ENCODE measurements at regions of chr1 and their contacts with region 1.

Region 1: DNA sequence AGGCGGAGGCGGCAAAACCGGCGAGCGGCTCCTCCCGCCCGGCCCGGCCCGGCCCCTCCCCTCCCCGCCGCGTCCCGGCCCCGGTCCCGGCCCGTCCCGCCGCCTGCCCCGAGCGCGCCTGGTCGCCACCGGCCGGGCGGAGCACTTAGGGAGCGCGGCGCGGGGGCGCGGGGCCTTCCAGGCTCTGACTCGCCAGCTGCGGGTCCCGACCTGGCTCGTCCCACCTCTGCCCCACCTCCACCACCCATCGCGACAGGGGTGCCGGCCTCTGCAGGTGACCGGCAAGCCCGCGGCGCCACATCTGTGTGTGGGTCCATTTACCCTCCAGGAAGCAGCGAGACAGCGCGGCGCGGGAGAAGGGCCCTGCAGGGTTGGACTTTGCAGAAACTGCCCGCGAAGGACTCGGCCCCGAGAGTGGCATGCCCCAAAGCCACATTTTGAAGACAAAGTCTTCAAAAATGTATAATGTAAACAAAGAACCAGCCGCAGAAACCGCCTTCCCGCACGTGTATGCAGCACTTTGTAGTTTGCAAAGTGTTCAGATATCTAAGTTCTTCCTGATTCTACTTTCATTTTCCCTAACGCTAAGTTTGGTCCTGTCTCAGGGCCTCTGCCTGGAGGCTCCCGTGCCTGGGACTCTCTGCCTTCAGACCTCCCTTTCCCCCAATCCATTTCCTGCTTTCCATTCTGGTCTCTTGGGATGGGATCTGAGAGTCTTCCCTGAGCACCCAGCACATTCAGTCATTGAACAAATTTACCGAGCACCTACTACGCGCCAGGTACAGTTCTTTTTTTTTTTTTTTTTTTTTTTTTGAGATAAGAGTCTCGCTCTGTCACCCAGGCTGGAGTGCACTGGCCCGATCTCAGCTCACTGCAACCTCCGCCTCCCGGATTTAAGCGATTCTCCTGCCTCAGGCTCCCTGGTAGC is at the start of gene TMCO4:
- DNase-seq: peak in 1 of 2 donors; percentile 74
- H3K4me3 ChIP-seq: peak within 1 kb of the TSS; percentile 74 to 80
- H3K27ac ChIP-seq: peak within 1 kb of the TSS; percentile 80 to 89
- H3K4me1 ChIP-seq: peaks cover 6 to 7% of the 10 kb centered on the region in 2 donors
- H3K27me3 ChIP-seq: no peaks in the 10 kb centered on the region
- CTCF ChIP-seq: no peak
- total RNA-seq, gene TMCO4: 5.7 TPM

Region 2: GRCh38 chr1:19728413-19729145 is 71.6 kb before region 1 on chr1:
- intact Hi-C with region 1: loop called (anchors 5 kb)
- DNase-seq: peak in 1 of 2 donors; percentile 66
- H3K4me3 ChIP-seq: no peak overlapping the region
- H3K27ac ChIP-seq: peak overlapping the region; percentile 77 to 88
- H3K4me1 ChIP-seq: peaks cover 0 to 29% of the 10 kb centered on the region in 2 donors
- H3K27me3 ChIP-seq: no peaks in the 10 kb centered on the region
- CTCF ChIP-seq: no peak

Region 3: DNA sequence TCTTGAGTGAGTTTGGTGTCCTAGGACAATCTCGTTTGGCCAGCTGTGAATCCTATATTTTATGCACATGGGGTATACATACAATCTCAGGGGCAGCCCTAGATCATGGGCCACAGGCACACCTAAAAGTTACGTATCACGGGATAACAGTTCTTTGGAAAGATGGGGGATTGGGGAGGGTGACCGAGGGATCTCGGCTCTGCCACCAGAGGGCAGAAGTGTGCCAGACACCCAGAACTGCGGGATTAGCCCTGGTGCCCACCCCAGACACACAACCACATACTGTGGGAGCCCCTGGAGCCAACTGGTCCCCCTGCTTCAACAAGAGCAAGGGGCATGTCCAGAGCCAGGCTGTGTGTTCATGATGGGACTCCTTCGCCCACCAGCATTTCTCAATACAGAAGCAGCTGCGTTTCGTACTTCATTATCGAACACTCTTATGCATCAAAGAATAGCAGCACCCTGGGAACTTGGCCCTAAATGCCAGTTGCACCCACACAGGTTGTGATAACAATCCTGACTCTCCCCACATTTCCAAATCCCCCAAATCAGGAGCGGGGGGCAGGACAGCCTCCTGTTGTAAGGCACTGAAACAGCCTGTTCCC is 37.9 kb before region 1 on chr1:
- intact Hi-C with region 1: loop called (anchors 5 kb)
- DNase-seq: no peak
- H3K4me3 ChIP-seq: no peak overlapping the region
- H3K27ac ChIP-seq: peak overlapping the region in 1 of 2 donors; percentile 10
- H3K4me1 ChIP-seq: peaks cover 6 to 9% of the 10 kb centered on the region in 2 donors
- H3K27me3 ChIP-seq: no peaks in the 10 kb centered on the region
- CTCF ChIP-seq: peak in 2 of 3 experiments; percentile 40 to 47

Region 4: GRCh38 chr1:20696397-20697329 is 896.5 kb after region 1 on chr1:
- intact Hi-C with region 1: no loop called
- DNase-seq: peak; percentile 46 to 91
- H3K4me3 ChIP-seq: peak overlapping the region; percentile 67 to 76
- H3K27ac ChIP-seq: peak overlapping the region; percentile 74 to 84
- H3K4me1 ChIP-seq: peaks cover 0 to 2% of the 10 kb centered on the region in 2 donors
- H3K27me3 ChIP-seq: no peaks in the 10 kb centered on the region
- CTCF ChIP-seq: peak; percentile 75 to 91 (median 78)

Region 5: DNA sequence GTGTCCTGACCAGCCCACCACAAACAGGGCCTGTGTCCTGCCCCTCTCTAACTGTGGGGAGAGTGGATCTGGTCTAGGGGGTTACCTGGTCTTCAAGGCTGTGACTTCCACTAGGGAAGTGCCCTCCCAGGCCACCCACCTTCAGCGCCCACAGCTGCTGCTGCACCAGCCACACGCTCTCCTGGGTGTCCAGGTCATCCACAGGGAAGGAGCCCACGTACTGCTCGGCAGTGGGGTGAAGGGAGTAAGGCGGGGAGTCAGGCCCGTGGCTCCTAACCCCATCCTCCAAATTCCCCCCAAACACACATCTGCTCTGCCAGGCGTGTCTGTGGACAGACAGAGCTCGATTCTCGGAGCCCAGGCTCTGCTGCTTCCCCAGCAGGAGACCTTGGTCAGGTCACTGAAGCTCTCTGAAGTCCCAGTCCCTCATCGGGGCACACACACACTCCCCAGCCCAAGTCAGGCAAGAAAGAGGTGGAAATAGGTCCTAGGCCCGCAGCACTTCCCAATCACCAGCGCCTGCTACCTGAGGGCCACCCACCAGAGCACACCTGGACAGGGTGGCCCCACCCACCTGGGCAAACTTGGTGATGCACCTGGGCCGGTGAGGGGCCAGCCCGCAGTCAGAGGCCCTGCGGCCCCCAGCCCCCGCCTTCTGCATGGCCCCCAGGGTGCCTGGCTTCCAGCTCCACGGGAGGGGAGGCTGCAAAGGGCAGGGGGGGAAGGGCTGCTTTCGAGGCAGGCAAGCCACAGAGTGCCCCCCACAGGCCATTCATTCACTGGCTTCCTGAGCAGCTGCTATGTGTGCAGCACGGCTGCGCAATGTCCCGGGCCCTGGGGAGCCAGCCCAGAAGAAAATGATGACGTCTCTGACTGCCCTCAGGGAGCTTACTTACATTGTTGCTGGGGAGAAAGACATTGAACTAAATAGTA is 927.5 kb after region 1 on chr1:
- intact Hi-C with region 1: no loop called
- DNase-seq: peak in 1 of 2 donors; percentile 56
- H3K4me3 ChIP-seq: no peak overlapping the region
- H3K27ac ChIP-seq: no peak overlapping the region
- H3K4me1 ChIP-seq: peaks cover 7 to 12% of the 10 kb centered on the region in 2 donors
- H3K27me3 ChIP-seq: peaks cover 5% of the 10 kb centered on the region
- CTCF ChIP-seq: no peak

Measured in ascending aorta (tissue), 2 donors.